Ovary (tissue), 10 donors: ENCODE measurements at regions of chr10 and their contacts with region 1.

Region 1: GRCh38 chr10:127245456-127245855 is 49.1 kb upstream of the INSYN2A start:
- DNase-seq: no peak
- H3K4me3 ChIP-seq: no peak overlapping the region
- H3K27ac ChIP-seq: no peak overlapping the region
- H3K4me1 ChIP-seq: peaks cover 4% of the 10 kb centered on the region
- H3K27me3 ChIP-seq: no peaks in the 10 kb centered on the region
- CTCF ChIP-seq: no peak
- EP300 ChIP-seq: no peak
- POLR2A ChIP-seq: no peak

Region 2: DNA sequence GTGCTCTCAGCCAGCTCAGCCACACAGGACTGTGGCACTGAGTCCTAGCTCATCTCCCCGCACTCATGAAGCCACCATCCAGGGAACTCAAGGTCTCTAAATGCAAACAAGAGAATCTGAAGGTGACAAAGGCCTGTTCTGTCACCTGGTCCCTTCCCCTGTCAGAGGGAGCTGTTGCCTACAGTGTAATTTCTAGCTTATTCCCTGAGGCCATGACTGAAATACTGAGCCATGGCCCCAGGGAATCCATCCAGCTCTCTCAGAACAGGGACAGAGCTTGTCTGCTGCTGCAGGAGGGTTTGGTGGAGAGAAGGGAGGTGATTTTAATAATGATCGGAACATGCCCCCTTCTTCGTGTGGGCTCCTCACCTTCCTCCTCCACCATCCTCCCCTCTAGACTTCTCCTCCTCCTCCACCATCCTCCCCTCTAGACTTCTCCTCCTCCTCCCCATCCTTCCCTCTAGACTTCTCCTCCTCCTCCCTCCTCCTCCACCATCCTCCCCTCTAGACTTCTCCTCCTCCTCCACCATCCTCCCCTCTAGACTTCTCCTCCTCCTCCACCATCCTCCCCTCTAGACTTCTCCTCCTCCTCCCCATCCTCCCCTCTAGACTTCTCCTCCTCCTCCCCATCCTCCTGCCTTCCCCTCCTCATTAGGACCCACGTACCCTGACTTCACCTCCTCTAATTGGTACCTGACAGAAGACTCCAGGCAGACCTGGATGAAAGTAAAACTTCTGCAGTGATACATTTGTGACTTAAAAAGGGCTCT is 1218.7 kb after region 1 on chr10:
- intact Hi-C with region 1: loop called in 1 of 4 experiments (anchors 5 kb)
- DNase-seq: peak in 3 of 5 donors; percentile 27 to 33 (median 29)
- H3K4me3 ChIP-seq: no peak overlapping the region
- H3K27ac ChIP-seq: no peak overlapping the region
- H3K4me1 ChIP-seq: no peaks in the 10 kb centered on the region
- H3K27me3 ChIP-seq: no peaks in the 10 kb centered on the region
- CTCF ChIP-seq: no peak
- EP300 ChIP-seq: no peak
- POLR2A ChIP-seq: no peak